PC-9 (cell line): ENCODE measurements at regions of chrX and their contacts with region 1.

Region 1: GRCh38 chrX:17812763-17813162 is 48.3 kb downstream of the RAI2 start:
- DNase-seq: no peak
- H3K4me3 ChIP-seq: no peak overlapping the region
- H3K27ac ChIP-seq: no peak overlapping the region
- H3K4me1 ChIP-seq: no peaks in the 10 kb centered on the region
- H3K27me3 ChIP-seq: peaks cover 16% of the 10 kb centered on the region; the same call in 1 of the 2 replicates
- CTCF ChIP-seq: peak; percentile 48

Region 2: DNA sequence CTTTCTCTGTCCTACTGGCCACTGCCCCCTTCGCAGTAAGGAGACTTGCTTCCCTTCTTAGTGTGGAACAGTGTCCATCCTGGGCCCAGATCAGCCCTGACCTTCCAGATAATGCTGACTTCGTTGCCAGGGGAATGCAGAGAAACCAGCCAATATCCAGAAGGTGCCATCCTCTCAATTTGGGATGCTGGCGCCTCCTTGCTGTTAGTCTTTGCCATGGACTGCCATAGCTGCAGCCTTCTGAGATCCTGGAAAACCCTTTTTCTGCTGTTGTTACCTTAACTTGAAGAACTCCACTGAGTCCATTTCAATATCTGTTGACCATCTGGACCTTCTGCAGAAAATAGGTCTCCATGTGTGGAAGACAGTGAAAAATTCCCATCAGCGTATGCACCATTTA is 26.5 kb after region 1 on chrX:
- CTCF ChIA-PET with region 1: no interaction called
- POLR2A ChIA-PET with region 1: no interaction called
- intact Hi-C with region 1: no loop called
- DNase-seq: no peak
- H3K4me3 ChIP-seq: no peak overlapping the region
- H3K27ac ChIP-seq: no peak overlapping the region
- H3K4me1 ChIP-seq: no peaks in the 10 kb centered on the region
- H3K27me3 ChIP-seq: peaks cover 27% of the 10 kb centered on the region
- CTCF ChIP-seq: no peak

Region 3: DNA sequence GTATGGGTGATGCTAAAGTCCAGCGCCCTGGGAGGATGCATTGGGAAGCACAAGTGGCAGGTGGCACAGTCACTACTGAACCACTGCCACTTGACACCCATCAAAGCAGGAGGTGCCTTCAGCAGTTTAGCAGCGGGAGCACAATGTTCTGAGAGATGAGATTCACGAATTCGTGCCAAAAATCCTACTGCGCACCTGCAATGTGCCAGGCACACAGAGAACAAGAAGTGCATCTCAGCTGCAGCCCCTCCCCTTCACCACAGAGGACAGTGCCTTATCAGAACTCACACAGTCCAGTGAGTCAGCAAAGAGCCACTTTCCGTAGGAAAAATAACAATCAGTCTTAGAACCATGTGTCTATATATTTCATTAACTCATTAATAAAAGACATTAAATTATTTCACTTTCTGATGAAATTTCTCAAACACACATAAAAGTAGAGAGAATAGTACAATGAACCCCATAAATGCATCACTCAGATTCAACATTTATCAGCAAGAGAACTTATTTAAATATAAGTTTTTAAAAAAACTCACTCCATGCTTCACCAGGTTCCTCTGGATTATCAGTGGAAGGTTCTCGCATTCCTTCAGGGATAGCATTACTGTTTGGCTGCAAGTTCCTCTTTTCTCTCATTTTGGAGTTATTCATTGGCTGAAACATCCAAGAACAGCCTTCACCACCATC is 360.9 kb after region 1 on chrX:
- CTCF ChIA-PET with region 1: no interaction called
- POLR2A ChIA-PET with region 1: interaction called, 22 read pairs
- intact Hi-C with region 1: no loop called
- DNase-seq: no peak
- H3K4me3 ChIP-seq: no peak overlapping the region
- H3K27ac ChIP-seq: no peak overlapping the region
- H3K4me1 ChIP-seq: no peaks in the 10 kb centered on the region
- H3K27me3 ChIP-seq: no peaks in the 10 kb centered on the region
- CTCF ChIP-seq: no peak